ENCODE measurements at regions of chr9 and their contacts with region 1.

Region 1: DNA sequence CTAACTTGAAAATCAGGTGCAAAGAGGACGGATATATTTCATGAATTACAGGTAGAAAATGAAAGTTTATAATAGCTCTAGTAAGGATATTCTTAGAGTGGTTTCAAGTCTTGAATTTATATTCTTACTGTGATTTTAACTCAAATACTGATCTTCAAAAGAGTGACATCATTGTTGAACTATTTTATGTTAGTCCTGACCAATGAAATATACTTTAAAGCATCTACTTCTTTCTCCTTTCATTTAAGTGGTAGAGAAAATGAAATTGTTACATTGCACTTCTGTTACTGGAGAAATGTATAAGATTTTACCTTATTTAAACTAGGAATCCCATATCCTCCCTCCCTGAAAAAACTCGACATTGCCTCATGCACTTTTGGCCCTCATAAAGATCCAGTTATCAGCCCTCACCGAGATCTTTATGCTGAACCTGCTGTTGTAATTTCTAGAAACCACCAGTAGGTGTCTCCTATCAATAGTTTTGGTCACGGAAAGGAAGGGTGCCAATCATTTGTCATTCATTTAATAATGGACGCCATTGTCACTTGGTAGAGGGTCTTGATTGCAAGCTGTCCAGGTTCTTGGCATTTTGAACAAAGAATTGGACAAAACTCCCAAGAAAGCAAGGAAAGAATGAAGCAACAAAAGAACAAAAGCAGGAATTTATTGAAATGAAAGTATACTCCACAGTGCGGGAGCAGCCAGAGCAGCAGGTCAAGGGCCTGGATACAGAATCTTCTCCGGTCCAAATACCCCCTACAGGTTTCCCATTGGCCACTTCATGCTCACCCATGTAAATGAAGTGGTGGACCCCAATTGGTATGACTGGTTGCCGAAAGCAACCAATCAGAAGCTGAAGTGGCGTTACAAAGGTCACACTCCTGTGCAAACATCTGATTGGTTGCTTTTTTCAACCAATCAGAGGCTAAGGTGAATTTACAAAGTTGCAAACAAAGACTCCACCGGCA is 524.2 kb downstream of the PSAT1 start:
- DNase-seq: peak; percentile 49
- ATAC-seq: peak; percentile 87
- H3K4me3 ChIP-seq: peak overlapping the region; percentile 5 to 41 (median 37); a peak in 3 of 6 replicates
- H3K27ac ChIP-seq: no peak overlapping the region
- H3K4me1 ChIP-seq: 0 out of 2 replicates have a peak, but pooled peaks cover 5% of the 10 kb centered on the region
- H3K27me3 ChIP-seq: no peaks in the 10 kb centered on the region
- CTCF ChIP-seq: peak; percentile 65
- EP300 ChIP-seq: no peak
- POLR2A ChIP-seq: no peak
- RAD21 ChIP-seq: no peak

Region 2: DNA sequence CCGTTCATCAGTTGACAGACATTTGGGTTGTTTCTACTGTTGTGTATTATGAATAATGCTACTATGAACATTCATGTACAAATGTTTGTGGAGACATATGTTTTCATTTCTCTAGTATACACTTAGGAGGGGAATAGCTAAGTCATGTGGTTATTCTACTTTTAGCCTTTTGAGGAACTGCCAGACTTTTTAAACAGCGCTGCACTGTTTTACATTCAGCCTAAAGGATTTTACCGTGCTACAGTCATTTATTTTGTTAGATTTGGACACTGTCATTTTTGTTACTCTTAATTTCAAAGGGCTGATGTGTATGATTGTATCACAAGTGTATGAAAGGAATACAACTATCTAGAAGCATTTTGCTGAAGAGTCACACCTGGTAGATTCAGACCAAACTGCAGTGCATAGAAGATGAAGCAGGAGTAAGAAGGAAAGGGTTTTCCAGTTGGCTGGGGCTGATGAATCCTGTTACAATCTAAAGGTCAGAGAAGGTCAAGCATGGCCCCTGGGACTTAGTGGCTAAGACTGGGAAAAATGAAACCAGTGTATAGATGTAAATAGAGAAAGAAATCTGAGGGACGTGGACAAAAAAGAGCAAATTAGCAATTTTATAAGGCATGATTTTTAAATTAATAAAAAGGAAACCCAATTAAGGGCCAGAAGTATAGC is 14.5 kb before region 1 on chr9:
- CTCF ChIA-PET with region 1: no interaction called
- POLR2A ChIA-PET with region 1: no interaction called
- in situ Hi-C with region 1: no loop called
- intact Hi-C with region 1: loop called (anchors 1 kb)
- DNase-seq: no peak
- ATAC-seq: no peak
- H3K4me3 ChIP-seq: no peak overlapping the region
- H3K27ac ChIP-seq: no peak overlapping the region
- H3K4me1 ChIP-seq: no peaks in the 10 kb centered on the region
- H3K27me3 ChIP-seq: no peaks in the 10 kb centered on the region
- CTCF ChIP-seq: no peak
- EP300 ChIP-seq: no peak
- POLR2A ChIP-seq: no peak
- RAD21 ChIP-seq: no peak

Region 3: DNA sequence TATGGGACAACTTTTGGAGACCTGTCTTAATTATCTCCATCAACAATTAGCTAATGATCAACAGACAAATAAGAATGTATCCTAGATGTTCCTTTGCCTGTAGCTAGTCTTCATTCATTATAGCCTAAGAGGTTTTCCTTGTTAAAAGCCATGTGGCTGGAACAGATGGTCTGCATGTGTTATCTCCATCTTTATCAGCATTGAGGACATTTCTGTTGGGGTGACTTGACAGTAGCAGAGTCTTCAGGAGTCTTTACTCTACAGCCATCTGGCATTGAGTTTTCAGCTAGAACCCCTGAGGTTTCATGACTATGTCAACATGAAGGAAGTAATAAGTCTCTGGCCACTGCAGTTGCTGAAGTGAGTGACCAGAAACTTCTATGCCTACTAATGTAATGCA is 644.0 kb after region 1 on chr9:
- CTCF ChIA-PET with region 1: no interaction called
- POLR2A ChIA-PET with region 1: no interaction called
- in situ Hi-C with region 1: no loop called
- intact Hi-C with region 1: no loop called
- DNase-seq: no peak
- ATAC-seq: no peak
- H3K4me3 ChIP-seq: no peak overlapping the region
- H3K27ac ChIP-seq: no peak overlapping the region
- H3K4me1 ChIP-seq: no peaks in the 10 kb centered on the region
- H3K27me3 ChIP-seq: no peaks in the 10 kb centered on the region
- CTCF ChIP-seq: no peak
- EP300 ChIP-seq: no peak
- POLR2A ChIP-seq: no peak
- RAD21 ChIP-seq: no peak